ENCODE measurements at regions of chr3 and their contacts with region 1.

Region 1: DNA sequence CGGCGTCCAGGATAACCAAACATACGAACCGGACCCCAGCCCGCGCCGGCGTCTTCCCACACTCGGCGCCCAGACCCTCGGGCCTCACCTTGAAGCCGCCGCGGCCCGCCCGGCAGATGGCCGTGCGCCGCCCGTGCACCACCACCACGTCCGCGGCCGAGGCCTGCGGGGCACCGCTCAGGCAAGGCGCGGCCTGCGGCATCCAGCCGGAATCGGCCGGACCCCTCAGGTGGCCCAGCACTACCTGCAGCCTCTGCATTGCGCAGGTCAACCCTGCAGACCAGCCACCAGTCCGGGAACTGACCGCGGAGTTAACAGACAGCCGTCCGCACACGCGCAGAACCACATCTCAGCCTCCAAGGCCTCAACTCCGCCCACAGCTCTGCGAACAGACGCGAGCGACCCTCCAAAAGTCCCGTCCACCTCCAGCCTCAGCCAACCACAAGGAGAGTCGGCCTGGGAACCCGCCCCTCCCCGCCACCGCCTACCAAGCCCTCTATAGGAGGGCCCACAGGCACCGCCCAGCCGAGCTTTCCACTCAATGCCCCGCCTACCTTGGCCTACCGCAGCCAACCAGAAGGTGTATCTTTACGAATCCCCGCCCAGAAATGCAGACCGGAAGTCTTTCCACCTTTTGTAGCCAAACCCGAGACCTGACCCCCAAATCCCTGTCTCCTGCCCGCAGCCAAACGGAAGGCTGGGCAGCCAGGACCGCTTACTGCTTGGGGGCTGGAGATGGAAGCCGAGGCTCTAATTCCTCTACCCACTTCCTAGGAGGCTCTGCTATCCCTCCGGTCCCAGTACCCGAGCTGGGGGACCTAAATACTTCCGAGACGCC is at the start of gene ACAA1:
- DNase-seq: peak; percentile 100
- H3K4me3 ChIP-seq: peak within 1 kb of the TSS; percentile 90 to 99
- H3K27ac ChIP-seq: peak within 1 kb of the TSS; percentile 91 to 94
- H3K4me1 ChIP-seq: peaks cover 10% of the 10 kb centered on the region
- H3K27me3 ChIP-seq: no peaks in the 10 kb centered on the region
- CTCF ChIP-seq: peak in 2 of 4 experiments; percentile 24 to 40
- POLR2A ChIP-seq: peak; percentile 97
- total RNA-seq, gene ACAA1: 89.8 to 112 TPM

Region 2: GRCh38 chr3:37324850-37325321 is 812.1 kb before region 1 on chr3:
- intact Hi-C with region 1: no loop called
- DNase-seq: no peak
- H3K4me3 ChIP-seq: no peak overlapping the region
- H3K27ac ChIP-seq: no peak overlapping the region
- H3K4me1 ChIP-seq: no peaks in the 10 kb centered on the region
- H3K27me3 ChIP-seq: no peaks in the 10 kb centered on the region
- CTCF ChIP-seq: no peak
- POLR2A ChIP-seq: no peak

Region 3: DNA sequence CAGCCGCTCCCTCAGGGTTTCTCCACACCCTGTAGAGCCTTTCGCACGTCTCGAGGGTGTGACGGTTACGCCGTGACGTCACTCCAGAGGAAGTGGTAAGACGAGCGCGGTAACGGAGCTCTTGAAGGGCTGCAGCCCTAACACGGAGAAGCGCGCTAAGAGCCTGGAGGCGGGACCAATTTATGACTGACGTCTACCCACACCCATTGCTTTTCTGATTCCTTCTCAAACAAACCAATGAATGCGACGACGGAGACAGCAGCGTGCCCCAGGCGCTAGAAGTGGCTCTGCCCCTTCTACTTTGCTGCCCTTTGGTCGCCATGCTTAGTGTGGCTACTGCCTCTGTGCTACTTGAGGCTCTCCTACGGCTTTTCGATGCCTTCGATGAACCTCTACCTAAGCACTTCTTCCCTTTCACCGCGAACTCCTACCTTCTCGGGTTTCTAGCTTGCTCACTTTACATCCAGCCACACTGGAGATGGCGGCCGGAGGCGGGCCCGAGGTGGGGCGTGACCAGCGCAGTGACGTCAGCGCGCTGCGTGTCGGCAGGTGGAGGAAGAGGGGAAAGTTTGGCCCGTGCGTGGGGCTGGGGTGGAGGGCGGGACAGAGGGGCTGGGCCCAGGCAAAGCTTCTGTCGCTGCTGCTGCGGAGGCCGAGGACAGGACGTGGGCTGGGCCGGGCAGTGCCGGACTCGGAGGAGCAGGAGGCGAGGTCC is 28.1 kb after region 1 on chr3 and contains the start of gene OXSR1:
- intact Hi-C with region 1: loop called (anchors 2 kb)
- DNase-seq: peak; percentile 99
- H3K4me3 ChIP-seq: peak within 1 kb of the TSS; percentile 97
- H3K27ac ChIP-seq: peak within 1 kb of the TSS; percentile 98 to 99
- H3K4me1 ChIP-seq: no peaks in the 10 kb centered on the region
- H3K27me3 ChIP-seq: no peaks in the 10 kb centered on the region
- CTCF ChIP-seq: peak in 1 of 4 experiments; percentile 16
- POLR2A ChIP-seq: peak; percentile 94
- total RNA-seq, gene OXSR1: 21.2 to 32.7 TPM

Region 4: DNA sequence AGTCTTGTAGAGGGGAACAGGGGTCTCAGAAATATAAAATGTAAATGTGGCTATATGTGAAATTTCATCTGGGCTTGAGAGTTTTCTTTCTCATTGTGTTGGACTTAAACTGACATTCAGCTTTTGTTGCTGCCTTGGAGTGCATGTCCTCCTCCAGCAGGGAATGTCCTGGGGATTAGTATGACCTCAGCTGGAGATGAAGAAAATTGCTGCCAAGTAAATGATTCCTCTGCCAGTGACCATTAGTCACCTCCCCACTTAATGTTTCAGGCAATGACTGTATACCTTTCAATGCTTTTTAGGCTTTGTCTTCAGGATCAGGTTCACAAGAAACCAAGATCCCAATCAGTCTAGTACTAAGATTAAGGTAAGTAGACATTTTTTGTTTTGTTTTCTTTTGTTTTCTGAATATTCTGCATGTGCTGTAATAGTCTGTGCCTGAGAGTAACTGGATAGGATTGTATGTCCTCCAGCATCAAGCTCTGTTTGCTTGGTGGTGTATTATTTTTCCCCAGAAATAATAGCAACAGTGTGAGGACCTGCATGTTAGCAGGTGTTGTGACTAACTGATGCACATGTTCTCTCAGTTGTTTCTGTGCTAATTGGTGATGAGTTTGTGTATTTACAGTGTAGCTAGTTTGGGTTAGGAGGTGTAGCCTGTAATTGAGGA is 110.5 kb after region 1 on chr3:
- intact Hi-C with region 1: loop called (anchors 5 kb)
- DNase-seq: no peak
- H3K4me3 ChIP-seq: no peak overlapping the region
- H3K27ac ChIP-seq: no peak overlapping the region
- H3K4me1 ChIP-seq: no peaks in the 10 kb centered on the region
- H3K27me3 ChIP-seq: no peaks in the 10 kb centered on the region
- CTCF ChIP-seq: peak in 1 of 4 experiments; percentile 27
- POLR2A ChIP-seq: no peak

Region 5: DNA sequence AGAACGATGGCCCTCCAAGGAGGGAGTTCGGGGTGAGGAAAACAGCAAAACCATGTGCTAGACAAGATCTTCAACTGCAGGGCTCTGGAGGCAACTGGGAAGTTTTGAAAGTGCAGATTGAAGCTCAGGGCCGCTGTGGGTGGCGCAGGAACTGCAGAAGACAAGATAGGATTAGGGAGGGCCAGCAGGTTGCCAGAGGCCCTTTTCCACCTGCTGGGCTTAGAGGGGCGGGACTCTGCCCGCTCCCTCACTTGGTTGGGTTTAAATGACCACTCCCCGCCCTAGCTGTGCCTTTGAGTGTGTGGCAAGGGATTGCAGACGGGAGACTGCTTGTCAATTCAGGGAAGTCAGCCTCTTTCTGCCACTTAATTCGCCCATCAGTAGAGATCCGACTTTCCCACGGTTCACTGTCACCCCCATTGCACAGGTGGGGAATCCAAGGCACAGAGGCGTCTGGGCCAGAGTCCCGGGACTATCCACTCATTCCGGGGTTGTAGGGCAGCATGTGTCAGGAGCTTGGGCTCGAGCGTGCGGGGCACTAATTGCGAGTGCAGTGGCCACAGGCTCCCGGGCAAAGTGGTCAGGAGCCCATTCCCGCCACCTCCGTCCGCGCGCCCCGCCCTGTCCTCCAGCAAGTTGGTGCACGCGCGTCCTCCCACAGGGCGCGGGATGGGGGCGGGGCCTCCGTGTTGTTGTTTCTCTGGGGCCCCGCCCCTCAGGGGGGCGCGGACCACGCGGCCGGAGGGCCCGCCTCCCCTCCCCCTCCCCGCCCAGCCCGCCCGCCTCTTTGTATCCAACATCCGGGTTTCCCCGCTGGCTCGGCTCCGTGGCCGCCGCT is 316.3 kb after region 1 on chr3 and contains the start of gene ACVR2B:
- intact Hi-C with region 1: loop called (anchors 5 kb)
- DNase-seq: peak; percentile 91
- H3K4me3 ChIP-seq: peak within 1 kb of the TSS; percentile 70 to 83
- H3K27ac ChIP-seq: peak within 1 kb of the TSS; percentile 89 to 92
- H3K4me1 ChIP-seq: peaks cover 3% of the 10 kb centered on the region
- H3K27me3 ChIP-seq: no peaks in the 10 kb centered on the region
- CTCF ChIP-seq: no peak
- POLR2A ChIP-seq: peak; percentile 52
- total RNA-seq, gene ACVR2B: 5.8 to 24.3 TPM

Region 6: DNA sequence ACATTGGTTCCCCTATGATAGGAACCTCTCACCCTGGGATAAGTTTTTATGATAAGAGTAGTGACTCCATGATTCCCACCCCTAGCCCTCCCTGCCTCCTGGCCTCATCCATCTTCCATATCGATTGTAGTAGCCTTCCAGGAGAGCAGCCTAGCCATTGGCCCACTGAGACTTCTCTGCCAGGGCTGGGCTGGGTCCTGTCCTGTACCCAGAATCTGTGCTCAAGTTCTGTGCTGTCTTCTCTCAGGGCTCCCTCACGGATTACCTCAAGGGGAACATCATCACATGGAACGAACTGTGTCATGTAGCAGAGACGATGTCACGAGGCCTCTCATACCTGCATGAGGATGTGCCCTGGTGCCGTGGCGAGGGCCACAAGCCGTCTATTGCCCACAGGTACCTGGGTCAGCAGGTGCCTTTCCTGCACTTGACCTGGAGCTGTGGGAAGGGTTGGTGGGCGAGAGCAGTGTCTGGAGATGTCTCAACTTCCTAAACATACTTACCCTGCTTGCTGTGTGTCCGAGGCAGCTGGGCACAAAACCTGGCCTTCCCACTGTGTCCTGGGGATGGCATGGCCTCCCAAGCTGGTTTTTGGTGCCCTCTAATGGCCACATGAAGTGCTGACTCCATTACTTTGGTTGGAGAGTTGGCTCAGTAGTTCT is 342.6 kb after region 1 on chr3:
- intact Hi-C with region 1: loop called (anchors 10 kb)
- DNase-seq: peak; percentile 65
- H3K4me3 ChIP-seq: no peak overlapping the region
- H3K27ac ChIP-seq: no peak overlapping the region
- H3K4me1 ChIP-seq: no peaks in the 10 kb centered on the region
- H3K27me3 ChIP-seq: no peaks in the 10 kb centered on the region
- CTCF ChIP-seq: peak; percentile 57 to 90 (median 86)
- POLR2A ChIP-seq: no peak